PC-3 (cell line): ENCODE measurements at regions of chr11 and their contacts with region 1.

Region 1: GRCh38 chr11:120952461-120953434 is 71.2 kb upstream of the TBCEL start:
- DNase-seq: peak; percentile 94
- ATAC-seq: peak; percentile 89
- H3K4me3 ChIP-seq: peak overlapping the region; percentile 51; the same call in 1 of the 2 replicates
- H3K27ac ChIP-seq: no peak overlapping the region
- H3K4me1 ChIP-seq: peaks cover 5% of the 10 kb centered on the region
- H3K27me3 ChIP-seq: peaks cover 55% of the 10 kb centered on the region
- CTCF ChIP-seq: peak; percentile 90

Region 2: DNA sequence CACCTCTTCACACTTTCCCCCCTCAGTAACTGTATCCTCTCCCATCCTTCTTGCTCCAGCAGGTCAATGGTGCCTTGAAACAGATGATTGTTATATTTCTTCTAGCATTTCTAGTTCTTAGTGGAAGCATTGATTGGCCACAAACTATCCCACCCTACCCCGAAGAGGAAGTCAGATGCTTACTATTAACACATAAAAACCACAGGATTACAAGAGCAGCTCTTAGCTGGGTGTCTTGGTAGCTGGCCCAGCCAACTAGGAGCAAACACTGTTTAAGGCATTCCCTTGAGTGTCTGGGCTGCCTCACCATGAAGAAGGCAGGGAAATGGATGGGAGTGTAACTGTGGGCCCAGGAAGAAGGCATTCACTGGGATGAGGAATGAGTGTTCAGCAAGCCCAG is 264.6 kb before region 1 on chr11:
- CTCF ChIA-PET with region 1: interaction called, 5 read pairs
- POLR2A ChIA-PET with region 1: no interaction called
- intact Hi-C with region 1: loop called (anchors 5 kb)
- DNase-seq: no peak
- ATAC-seq: no peak
- H3K4me3 ChIP-seq: no peak overlapping the region
- H3K27ac ChIP-seq: no peak overlapping the region
- H3K4me1 ChIP-seq: no peaks in the 10 kb centered on the region
- H3K27me3 ChIP-seq: peaks cover 75% of the 10 kb centered on the region
- CTCF ChIP-seq: no peak

Region 3: DNA sequence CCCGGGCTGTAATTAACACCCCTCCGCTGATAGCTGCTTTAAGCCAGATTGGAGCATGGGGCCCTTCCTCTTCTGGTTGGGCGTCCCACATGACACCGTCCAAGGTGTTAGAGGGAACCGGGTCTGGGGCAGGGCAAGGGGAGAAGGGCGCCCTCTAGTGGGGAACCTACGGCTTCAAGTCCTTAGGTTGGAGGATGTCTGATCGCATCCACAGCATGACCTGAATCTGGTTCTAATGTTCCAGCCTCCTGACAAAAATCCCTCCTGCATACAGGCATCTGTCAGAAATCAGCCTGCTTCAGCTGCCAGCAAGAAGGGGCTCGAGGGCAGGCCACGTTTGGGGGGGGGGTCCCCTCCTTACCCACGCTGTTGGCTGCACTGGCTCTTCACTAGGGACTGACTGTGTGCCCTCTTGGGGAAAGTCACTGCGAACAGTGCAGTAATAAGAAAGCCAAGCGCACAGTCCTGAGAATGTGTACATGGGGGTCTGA is 23.0 kb before region 1 on chr11:
- CTCF ChIA-PET with region 1: no interaction called
- POLR2A ChIA-PET with region 1: no interaction called
- intact Hi-C with region 1: no loop called
- DNase-seq: peak; percentile 50
- ATAC-seq: peak; percentile 76
- H3K4me3 ChIP-seq: no peak overlapping the region
- H3K27ac ChIP-seq: no peak overlapping the region
- H3K4me1 ChIP-seq: no peaks in the 10 kb centered on the region
- H3K27me3 ChIP-seq: peaks cover 6% of the 10 kb centered on the region; the same call in 1 of the 2 replicates
- CTCF ChIP-seq: peak; percentile 92